Mammary epithelial cell (primary cell): ENCODE measurements at regions of chr4 and their contacts with region 1.

Region 1: GRCh38 chr4:25159884-25160713 is at the start of gene SEPSECS:
- DNase-seq: peak; percentile 96
- H3K4me3 ChIP-seq: peak within 1 kb of the TSS; percentile 71 to 96 (median 91)
- H3K27ac ChIP-seq: peak within 1 kb of the TSS; percentile 83
- H3K4me1 ChIP-seq: peaks cover 24% of the 10 kb centered on the region
- H3K27me3 ChIP-seq: no peaks in the 10 kb centered on the region
- CTCF ChIP-seq: no peak
- total RNA-seq, gene SEPSECS: 7.8 to 8.8 TPM

Region 2: GRCh38 chr4:24924309-24924781 is 235.8 kb before region 1 on chr4:
- CTCF ChIA-PET with region 1: no interaction called
- dilution Hi-C with region 1: no loop called
- in situ Hi-C with region 1: no loop called
- intact Hi-C with region 1: no loop called
- DNase-seq: peak; percentile 56
- H3K4me3 ChIP-seq: no peak overlapping the region
- H3K27ac ChIP-seq: no peak overlapping the region
- H3K4me1 ChIP-seq: no peaks in the 10 kb centered on the region
- H3K27me3 ChIP-seq: peaks cover 8% of the 10 kb centered on the region
- CTCF ChIP-seq: no peak

Region 3: DNA sequence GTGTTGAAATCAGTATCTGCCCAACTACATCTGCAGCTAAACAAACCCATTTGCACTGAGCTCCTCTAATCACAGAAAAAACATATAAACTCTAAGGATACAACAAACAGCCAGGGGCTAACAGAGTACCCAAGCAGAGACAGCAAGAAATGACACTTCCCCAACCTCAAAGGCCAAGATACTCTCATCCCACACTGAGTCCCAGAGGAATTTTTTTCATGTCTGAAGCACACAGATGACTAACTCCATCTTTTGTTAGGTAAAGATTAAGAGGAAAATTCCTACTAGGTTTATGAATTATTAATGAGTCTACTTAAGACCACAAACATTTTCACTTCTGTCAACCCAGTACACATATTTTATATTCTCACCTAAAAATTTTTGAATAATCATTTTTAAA is 31.4 kb before region 1 on chr4:
- CTCF ChIA-PET with region 1: no interaction called
- dilution Hi-C with region 1: no loop called
- in situ Hi-C with region 1: no loop called
- intact Hi-C with region 1: no loop called
- DNase-seq: no peak
- H3K4me3 ChIP-seq: no peak overlapping the region
- H3K27ac ChIP-seq: no peak overlapping the region
- H3K4me1 ChIP-seq: no peaks in the 10 kb centered on the region
- H3K27me3 ChIP-seq: no peaks in the 10 kb centered on the region
- CTCF ChIP-seq: no peak

Region 4: GRCh38 chr4:25172961-25173915 is 13.1 kb after region 1 on chr4:
- CTCF ChIA-PET with region 1: no interaction called
- dilution Hi-C with region 1: no loop called
- in situ Hi-C with region 1: no loop called
- intact Hi-C with region 1: loop called (anchors 1 kb)
- DNase-seq: peak; percentile 96
- H3K4me3 ChIP-seq: no peak overlapping the region
- H3K27ac ChIP-seq: peak overlapping the region; percentile 35
- H3K4me1 ChIP-seq: peaks cover 26% of the 10 kb centered on the region
- H3K27me3 ChIP-seq: no peaks in the 10 kb centered on the region
- CTCF ChIP-seq: no peak

Region 5: DNA sequence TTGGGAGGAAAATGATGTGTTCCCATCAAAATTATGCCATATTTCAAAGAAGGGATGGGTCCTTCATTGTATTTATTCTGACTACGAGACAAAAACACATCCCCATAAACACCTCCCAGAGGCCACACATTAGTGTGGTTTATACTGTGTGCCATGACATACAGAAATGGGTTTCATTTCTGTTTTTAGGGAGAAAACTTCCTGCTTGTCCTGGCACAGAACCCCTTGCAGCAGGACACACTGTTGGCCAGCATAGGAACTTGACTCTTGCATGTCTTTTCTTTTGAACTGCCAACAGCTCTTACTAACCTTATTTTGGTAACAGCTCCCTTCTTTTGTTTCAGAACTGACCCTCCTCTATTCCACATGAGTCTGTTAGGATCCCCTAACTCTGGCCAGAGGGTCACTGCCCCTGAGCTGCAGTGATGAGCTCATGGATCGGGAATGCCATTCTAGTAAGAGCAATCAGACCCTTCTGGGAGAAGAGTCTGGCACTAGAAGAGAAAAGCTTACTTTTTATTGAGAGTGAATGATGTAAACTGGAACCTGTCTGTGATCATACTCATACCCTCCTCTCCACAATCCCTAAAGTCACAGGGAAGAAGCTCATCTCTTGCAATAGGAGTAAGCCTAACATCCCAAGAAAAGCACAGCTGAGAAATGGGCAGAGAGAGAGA is 840.3 kb after region 1 on chr4:
- CTCF ChIA-PET with region 1: no interaction called
- dilution Hi-C with region 1: no loop called
- in situ Hi-C with region 1: no loop called
- intact Hi-C with region 1: no loop called
- DNase-seq: no peak
- H3K4me3 ChIP-seq: no peak overlapping the region
- H3K27ac ChIP-seq: no peak overlapping the region
- H3K4me1 ChIP-seq: no peaks in the 10 kb centered on the region
- H3K27me3 ChIP-seq: peaks cover 2% of the 10 kb centered on the region
- CTCF ChIP-seq: no peak